Activated T-helper 1 cell treated with anti-CD3 and anti-CD28 coated beads, Interleukin-12 subunit alpha, Interleukin-12 subunit beta, Interleukin-2, Interleukin-4 antibody, amounts not matched to agents 30 ng/mL and 10 ng/mL and 1 ng/mL, durations not matched to agents 14 hours and 24 hours and 36 hours (primary cell): ENCODE measurements at regions of chr9 and their contacts with region 1.

Region 1: DNA sequence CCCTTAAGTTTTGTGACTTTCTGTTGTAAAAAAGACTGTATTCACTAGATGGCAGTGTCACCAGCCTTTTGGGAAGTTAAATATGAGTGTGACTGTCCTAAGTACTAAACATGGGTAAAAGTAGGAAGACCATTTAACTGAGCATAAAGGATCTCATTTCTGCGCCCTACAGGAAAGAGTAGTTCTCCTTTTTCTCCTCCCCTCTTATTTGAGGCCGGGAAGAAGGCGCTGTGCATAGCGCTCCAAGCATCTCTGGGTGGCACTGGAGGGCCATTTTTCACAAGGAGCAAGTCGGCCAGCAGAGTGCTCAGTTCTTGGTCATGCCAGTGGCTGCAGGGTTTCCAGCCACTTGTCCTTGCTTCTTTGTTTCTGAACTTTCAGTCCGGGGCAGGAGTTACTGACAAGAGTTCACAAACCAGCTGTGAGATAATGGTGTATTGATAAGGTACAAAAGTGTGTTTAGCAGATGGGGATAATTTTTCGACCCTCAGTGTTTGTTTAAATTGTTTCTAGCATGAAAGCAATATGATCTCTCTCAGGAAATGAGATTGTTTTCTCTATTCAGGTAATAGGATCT is 227.6 kb upstream of the DMRT1 start:
- DNase-seq: no peak
- H3K4me3 Mint-ChIP-seq: no peak overlapping the region
- H3K27ac Mint-ChIP-seq: no peak overlapping the region
- H3K4me1 Mint-ChIP-seq: peaks cover 6% of the 10 kb centered on the region
- H3K27me3 Mint-ChIP-seq: no peaks in the 10 kb centered on the region

Region 2: DNA sequence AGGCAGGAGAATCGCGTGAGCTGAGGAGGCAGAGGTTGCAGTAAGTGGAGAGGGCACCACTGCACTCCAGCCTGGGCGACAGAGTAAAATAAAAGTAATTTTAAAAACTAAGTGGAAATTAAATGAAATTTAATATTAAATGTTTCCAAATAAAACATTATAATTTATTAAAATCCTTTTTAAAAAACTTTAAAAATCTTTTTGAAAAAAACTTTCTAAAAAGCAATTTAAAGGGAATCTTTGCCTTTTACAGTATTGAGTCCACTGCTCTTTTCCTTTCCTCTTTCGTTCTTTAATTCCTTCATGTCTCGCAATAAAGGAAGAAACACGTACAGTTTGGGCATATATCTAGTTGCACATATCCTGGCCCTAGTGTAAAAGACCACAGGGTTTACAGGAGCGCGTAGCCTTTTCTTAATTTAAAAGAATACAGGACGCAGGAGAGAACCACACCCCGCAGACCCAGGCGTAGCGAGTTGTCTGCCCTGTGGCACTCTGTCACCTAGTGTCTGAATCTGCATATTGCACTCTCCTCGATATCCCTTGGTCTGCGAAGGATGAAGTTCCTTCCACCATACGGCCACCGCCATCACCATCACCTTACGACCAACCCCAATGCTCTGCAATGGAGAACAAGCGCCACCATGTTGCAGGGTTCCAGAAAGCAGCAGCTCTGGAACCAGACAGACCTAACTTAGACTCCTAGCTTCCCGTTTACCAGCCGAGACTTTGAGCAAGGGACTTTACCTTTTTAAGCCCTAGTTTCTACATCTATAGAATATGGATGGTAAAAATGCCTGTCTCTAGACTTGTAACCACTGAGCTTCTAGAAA is 150.0 kb after region 1 on chr9:
- intact Hi-C with region 1: loop called (anchors 1 kb)
- DNase-seq: peak; percentile 27
- H3K4me3 Mint-ChIP-seq: no peak overlapping the region
- H3K27ac Mint-ChIP-seq: no peak overlapping the region
- H3K4me1 Mint-ChIP-seq: peaks cover 19% of the 10 kb centered on the region
- H3K27me3 Mint-ChIP-seq: peaks cover 17% of the 10 kb centered on the region

Region 3: DNA sequence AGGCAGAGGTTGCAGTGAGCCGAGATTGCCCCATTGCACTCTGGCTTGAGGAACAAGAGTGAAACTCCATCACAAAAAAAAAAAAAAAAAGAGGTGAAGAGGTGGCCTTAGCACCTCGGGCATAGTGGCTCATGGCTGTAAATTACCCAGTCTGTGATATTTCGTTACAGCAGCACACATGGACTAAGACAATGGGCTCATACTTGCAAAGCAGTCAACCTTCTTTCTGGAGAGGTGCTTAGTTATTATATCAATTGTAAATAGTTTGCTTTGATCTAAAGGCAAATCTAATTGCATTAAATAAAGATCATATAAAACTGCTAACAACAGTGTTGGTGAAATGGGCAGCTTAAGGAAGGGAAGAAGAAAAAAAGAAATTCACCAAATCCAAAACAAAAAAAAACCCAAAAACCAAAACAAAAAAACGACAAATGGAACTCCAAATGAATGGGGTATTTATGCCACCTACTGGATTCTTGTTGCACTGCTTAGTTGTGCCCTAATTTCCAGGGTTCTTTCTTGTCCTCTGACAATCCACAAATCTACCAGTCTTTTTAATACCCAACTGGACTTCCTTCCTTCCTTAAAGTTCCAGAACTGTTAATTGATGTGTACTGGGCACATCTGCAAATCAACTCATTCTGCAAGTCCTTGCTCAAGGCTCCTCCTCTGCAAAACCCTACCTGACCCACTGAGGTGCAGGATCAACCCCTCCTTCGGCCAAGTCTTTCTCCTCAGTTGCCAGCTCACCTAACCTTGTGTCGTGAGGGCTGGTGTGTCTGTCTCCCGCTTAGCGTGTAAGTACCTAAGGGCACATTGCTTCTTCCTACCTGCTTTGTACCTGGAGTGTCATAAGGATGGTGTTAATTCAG is 192.7 kb after region 1 on chr9:
- intact Hi-C with region 1: loop called (anchors 1 kb)
- DNase-seq: no peak
- H3K4me3 Mint-ChIP-seq: no peak overlapping the region
- H3K27ac Mint-ChIP-seq: no peak overlapping the region
- H3K4me1 Mint-ChIP-seq: no peaks in the 10 kb centered on the region
- H3K27me3 Mint-ChIP-seq: no peaks in the 10 kb centered on the region